AG04450 (cell line): ENCODE measurements at regions of chr4 and their contacts with region 1.

Region 1: DNA sequence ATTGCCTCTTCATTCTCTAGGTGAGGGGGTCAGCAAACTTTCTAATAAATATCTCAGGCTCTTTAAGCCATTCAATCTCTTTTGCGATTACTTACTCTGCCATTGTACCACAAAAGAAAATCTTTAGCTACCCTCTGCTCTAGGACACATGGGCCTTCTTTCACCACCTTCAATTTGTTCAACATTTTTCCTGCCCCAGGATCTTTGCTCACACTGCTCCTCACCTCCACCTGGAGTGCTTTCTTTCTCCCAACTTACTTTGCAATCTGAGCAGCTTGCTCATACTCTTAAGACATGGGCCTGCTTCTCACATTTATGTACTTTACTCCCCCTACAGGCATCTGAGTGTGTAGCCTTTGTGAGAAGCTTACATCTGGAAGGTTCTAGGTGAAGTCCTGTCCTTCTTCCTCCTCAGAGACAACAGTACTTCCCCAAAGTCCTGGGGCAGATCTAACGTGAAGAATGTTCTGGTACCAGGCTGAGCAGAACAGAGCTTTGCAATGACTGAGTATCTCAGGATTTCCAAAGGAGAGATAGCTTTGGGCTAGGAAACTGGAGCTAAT is 55.0 kb upstream of the PRDM5 start:
- DNase-seq: peak; percentile 33
- H3K4me3 ChIP-seq: no peak overlapping the region
- H3K27ac ChIP-seq: no peak overlapping the region
- H3K27me3 ChIP-seq: no peaks in the 10 kb centered on the region
- CTCF ChIP-seq: peak; percentile 84

Region 2: DNA sequence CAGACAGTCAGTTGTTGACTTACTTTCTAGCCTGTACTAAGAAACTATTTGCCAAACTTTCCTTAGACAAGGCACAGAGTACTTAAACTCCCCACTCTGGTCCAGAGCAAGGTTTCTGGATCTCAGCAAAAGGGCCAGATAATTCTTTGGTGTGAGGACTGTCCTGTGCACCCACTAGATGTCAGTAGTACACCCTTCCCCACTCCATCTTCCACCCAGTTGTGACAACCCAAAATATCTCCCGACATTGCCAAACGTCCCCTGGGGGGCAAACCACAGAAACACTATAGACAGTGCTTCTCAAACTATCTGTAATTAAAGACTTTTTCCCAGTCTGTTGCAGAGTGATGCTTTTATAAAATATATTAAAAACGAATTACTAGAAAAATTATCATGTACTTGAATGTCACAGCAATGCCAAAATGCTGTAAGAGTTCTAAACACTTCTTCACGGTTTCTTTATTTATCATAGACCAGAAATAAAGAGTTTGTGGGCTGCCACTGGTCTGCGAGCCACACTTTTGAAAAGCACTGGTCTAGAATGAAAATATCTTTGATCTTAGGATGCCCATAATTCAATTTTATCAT is 258.4 kb before region 1 on chr4:
- CTCF ChIA-PET with region 1: interaction called, 46 read pairs
- POLR2A ChIA-PET with region 1: no interaction called
- DNase-seq: peak; percentile 8
- H3K4me3 ChIP-seq: no peak overlapping the region
- H3K27ac ChIP-seq: no peak overlapping the region
- H3K27me3 ChIP-seq: no peaks in the 10 kb centered on the region
- CTCF ChIP-seq: peak; percentile 84

Region 3: GRCh38 chr4:120918788-120919187 is 58.7 kb before region 1 on chr4:
- CTCF ChIA-PET with region 1: interaction called, 15 read pairs
- POLR2A ChIA-PET with region 1: no interaction called
- DNase-seq: no peak
- H3K4me3 ChIP-seq: no peak overlapping the region
- H3K27ac ChIP-seq: no peak overlapping the region
- H3K27me3 ChIP-seq: no peaks in the 10 kb centered on the region
- CTCF ChIP-seq: no peak